CD8-positive, alpha-beta memory T cell (primary cell): ENCODE measurements at regions of chr1 and their contacts with region 1.

Region 1: DNA sequence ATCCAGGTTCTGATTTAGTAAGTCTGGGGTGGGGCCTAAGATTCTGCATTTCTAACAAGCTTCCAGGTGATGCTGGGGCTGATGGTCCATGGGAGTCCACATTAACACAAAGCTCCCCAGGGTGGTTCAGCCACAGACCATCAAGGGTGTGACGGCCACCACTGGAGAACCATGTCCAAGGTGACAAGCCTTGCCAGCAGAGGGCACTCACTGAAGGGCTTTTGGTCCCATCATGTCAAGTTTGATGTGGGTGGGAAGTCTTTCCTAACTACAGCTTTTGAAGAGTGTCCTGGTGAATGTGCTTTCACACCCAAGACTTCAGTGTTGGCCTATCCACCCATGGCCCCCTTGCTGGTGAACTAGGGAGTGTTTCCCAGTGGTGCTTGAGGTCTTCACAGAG is 67.1 kb downstream of the UBE2T start:
- DNase-seq: peak in 3 of 5 donors; percentile 6 to 62 (median 25)
- H3K4me3 ChIP-seq: no peak overlapping the region
- H3K4me3 Mint-ChIP-seq: no peak overlapping the region
- H3K27ac ChIP-seq: no peak overlapping the region
- H3K27ac Mint-ChIP-seq: peak overlapping the region in 1 of 8 donors; percentile 70
- H3K4me1 ChIP-seq: no peaks in the 10 kb centered on the region
- H3K4me1 Mint-ChIP-seq: no peaks in the 10 kb centered on the region
- H3K27me3 ChIP-seq: no peaks in the 10 kb centered on the region
- H3K27me3 Mint-ChIP-seq: peaks cover 1 to 6% of the 10 kb centered on the region in 2 donors

Region 2: DNA sequence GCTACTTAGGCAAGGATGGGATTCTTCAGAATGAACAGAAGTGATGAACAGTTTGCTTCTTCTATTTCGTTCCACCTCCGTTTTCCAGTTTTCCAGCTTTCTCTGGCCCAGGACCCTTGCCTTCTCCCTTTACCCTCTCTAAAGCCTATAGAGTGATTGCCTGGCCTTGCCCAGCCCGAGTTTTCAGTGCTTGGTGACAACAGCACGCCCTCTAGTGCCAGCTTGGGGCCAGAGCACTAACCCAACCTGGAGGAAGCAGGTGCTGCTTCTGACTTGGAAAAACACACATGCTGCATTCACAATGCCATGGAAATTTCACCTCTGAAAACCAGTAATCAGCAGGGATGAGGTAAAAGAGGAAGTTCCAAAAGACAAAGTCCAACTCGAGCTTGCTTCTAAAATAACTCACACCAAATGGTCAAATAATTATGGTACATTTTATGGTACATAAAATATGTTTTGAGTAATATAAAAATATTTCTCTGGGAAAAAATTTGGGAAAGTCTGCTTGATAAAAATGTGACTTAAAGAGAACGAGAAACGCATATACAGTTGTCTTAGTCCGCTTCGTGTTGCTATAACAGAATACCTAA is 41.1 kb after region 1 on chr1:
- CTCF ChIA-PET with region 1: interaction called, 18 read pairs
- POLR2A ChIA-PET with region 1: no interaction called
- DNase-seq: peak; percentile 48 to 79 (median 61)
- H3K4me3 ChIP-seq: no peak overlapping the region
- H3K4me3 Mint-ChIP-seq: no peak overlapping the region
- H3K27ac ChIP-seq: no peak overlapping the region
- H3K27ac Mint-ChIP-seq: no peak overlapping the region
- H3K4me1 ChIP-seq: no peaks in the 10 kb centered on the region
- H3K4me1 Mint-ChIP-seq: peaks cover 0 to 7% (median 2%) of the 10 kb centered on the region in 3 donors
- H3K27me3 ChIP-seq: no peaks in the 10 kb centered on the region
- H3K27me3 Mint-ChIP-seq: peaks cover 3 to 4% of the 10 kb centered on the region in 2 donors